Motor neuron (in vitro differentiated cells): ENCODE measurements at regions of chr1 and their contacts with region 1.

Region 1: GRCh38 chr1:37692078-37692833 is at the start of gene CDCA8:
- ATAC-seq: peak; percentile 77 to 91 (median 90)
- H3K4me3 ChIP-seq: peak within 1 kb of the TSS; percentile 47 to 83 (median 71)
- H3K27ac ChIP-seq: peak within 1 kb of the TSS in 1 of 2 donors; percentile 35
- H3K4me1 ChIP-seq: peaks cover 8 to 13% of the 10 kb centered on the region in 2 donors
- total RNA-seq, gene CDCA8: 0.20 to 57.4 (median 3.2) TPM

Region 2: DNA sequence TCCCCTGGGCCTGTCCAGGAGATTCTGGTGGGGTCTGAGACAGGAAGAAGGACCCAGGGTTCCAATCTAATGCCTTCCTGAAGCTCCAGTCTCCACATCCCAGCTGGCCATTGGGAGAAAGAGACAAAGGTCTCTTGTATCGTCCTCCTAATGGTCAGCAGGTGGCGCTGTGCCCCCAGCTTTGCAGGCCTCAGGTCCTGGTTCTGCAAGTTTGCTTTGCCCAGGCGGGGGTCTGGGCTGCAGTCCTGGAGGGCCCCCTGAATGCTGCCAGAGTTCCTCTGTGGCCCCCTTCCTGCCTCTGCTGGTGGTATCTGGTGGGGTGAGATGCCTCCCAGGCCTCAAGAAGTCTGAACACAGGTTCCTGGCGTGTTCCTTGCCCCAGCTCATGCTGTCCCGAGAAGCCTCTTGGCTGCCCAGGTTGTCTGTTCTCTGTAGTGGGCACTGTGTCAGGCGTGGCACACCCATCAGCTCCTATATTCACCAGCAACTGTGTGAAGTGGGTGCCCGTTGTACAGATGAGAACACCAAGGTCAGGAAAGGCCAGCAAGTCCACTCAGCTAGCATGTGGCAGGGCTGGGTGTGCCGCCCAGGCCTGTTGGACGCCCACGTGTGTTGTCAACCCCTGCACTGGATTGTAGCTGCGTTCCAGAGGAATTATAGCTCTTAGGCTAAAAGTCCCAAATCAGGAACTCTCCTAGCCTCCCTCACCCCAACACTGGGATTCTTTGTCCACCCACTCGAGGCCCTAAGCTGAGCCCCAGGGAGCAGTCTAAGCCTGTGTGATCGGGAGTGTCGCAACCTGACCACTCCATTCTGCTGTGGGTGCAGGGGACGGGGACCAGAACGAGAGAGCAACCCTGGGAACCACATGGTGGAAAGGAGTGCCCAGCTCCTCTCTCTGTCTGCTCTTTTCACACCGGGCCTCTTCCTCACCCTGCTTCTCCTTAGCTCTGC is 1175.6 kb before region 1 on chr1:
- in situ Hi-C with region 1: loop called in 1 of 9 experiments (anchors 25 kb)
- ATAC-seq: peak; percentile 36 to 92 (median 58)
- H3K4me3 ChIP-seq: no peak overlapping the region
- H3K27ac ChIP-seq: peak overlapping the region in 1 of 2 donors; percentile 44
- H3K4me1 ChIP-seq: peaks cover 28 to 30% of the 10 kb centered on the region in 2 donors

Region 3: GRCh38 chr1:36553591-36554322 is 1138.5 kb before region 1 on chr1:
- in situ Hi-C with region 1: loop called in 1 of 9 experiments (anchors 25 kb)
- ATAC-seq: peak; percentile 81 to 99 (median 92)
- H3K4me3 ChIP-seq: no peak overlapping the region
- H3K27ac ChIP-seq: no peak overlapping the region
- H3K4me1 ChIP-seq: peaks cover 4 to 8% of the 10 kb centered on the region in 2 donors

Region 4: DNA sequence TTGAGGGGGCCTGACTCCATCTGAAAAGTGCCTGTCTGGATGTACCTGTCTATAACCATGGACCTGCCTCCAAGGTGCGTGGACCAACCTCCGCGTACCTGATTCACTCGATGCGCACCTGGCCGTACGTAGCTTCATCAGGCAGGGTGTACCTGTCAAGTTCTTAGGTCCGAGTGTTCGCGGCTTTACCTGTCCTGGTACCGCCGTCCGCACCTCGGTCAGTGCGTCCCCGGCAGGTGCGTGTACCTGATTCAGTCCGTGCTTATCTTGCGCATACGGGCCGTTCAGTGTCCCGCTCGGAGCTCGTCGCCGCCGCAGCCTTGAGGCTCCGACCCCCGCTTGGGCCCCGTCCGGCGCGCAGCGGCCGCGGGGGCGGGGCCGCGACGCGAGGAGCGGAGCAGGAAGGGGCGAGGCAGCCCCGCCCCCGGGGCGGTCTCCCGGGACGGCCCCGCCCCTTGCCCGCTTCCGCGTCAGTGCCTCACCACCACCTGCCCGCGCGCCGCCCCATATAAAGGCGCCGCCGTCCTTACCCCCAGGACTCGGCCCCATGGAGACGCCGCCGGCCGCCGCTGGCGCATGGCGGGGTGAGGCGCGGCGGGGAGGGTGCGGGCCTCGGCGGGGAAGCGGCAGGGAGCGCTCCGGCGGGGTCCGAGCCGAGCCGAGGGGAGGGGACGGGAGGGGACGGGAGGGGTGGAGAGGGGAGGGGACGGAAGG is 218.1 kb before region 1 on chr1 and contains the start of gene ZC3H12A:
- in situ Hi-C with region 1: loop called in 1 of 9 experiments (anchors 25 kb)
- ATAC-seq: peak; percentile 42 to 80 (median 70)
- H3K4me3 ChIP-seq: peak within 1 kb of the TSS; percentile 43 to 61 (median 49)
- H3K27ac ChIP-seq: no peak within 1 kb of the TSS
- H3K4me1 ChIP-seq: peaks cover 62 to 65% of the 10 kb centered on the region in 2 donors
- total RNA-seq, gene ZC3H12A: 1.8 to 13.3 (median 5.4) TPM

Region 5: DNA sequence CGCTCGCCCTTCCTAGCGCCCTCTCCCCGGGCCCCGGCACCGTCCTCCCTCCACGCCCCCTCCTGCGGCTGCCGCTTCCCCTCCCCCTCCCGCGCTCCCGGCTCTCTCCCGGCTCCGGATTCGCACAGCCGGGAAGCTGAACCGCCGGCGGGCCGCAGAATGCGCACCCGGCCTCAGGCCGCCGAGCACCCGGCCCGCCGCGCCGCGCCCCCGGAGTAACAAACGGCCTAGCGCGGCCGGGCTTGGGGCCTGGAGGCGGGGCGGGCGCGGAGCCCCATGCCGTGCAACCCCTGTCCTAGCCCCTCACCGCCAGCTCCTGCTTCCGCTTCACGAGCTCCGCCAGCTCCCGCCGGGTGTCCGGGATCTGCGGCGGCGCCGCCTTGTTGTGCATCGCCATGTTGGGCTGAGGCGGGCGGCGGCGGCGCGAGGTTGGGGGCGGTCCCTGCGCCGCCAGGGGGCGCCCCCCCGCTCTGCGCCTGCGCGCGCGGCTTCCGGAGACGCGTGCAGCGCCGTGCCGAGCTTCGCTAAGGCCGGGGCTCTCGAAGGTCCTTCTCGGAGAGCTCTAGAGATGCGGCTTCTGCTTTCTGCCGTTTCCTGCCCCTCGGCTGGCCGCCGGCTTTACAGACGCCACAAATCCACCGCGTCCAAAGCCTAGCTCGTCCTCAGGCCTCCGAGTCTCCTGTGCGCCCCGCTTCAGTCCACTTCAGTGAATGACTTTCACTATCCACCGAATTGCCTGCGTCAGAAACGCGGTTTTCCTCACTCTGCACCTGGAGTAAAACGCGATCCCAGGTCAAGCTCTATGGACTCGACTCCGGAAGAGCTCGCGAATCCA is 177.7 kb before region 1 on chr1 and contains the start of gene MEAF6:
- in situ Hi-C with region 1: loop called in 1 of 9 experiments (anchors 25 kb)
- ATAC-seq: peak; percentile 94 to 97 (median 96)
- H3K4me3 ChIP-seq: peak within 1 kb of the TSS; percentile 89 to 95 (median 93)
- H3K27ac ChIP-seq: peak within 1 kb of the TSS; percentile 92 to 93
- H3K4me1 ChIP-seq: peaks cover 11 to 12% of the 10 kb centered on the region in 2 donors
- total RNA-seq, gene MEAF6: 41.1 to 172 (median 138) TPM